HEK293T (cell line): ENCODE measurements at regions of chr5 and their contacts with region 1.

Region 1: GRCh38 chr5:96336351-96336985 is 96.6 kb downstream of the PCSK1 start:
- DNase-seq: peak; percentile 55

Region 2: GRCh38 chr5:95858661-95859326 is 477.7 kb before region 1 on chr5:
- CTCF ChIA-PET with region 1: interaction called, 10 read pairs
- POLR2A ChIA-PET with region 1: no interaction called
- DNase-seq: peak; percentile 91

Region 3: GRCh38 chr5:95892780-95893354 is 443.6 kb before region 1 on chr5:
- CTCF ChIA-PET with region 1: interaction called, 10 read pairs
- POLR2A ChIA-PET with region 1: no interaction called
- DNase-seq: peak; percentile 44